ENCODE measurements at regions of chr12 and their contacts with region 1.

Region 1: DNA sequence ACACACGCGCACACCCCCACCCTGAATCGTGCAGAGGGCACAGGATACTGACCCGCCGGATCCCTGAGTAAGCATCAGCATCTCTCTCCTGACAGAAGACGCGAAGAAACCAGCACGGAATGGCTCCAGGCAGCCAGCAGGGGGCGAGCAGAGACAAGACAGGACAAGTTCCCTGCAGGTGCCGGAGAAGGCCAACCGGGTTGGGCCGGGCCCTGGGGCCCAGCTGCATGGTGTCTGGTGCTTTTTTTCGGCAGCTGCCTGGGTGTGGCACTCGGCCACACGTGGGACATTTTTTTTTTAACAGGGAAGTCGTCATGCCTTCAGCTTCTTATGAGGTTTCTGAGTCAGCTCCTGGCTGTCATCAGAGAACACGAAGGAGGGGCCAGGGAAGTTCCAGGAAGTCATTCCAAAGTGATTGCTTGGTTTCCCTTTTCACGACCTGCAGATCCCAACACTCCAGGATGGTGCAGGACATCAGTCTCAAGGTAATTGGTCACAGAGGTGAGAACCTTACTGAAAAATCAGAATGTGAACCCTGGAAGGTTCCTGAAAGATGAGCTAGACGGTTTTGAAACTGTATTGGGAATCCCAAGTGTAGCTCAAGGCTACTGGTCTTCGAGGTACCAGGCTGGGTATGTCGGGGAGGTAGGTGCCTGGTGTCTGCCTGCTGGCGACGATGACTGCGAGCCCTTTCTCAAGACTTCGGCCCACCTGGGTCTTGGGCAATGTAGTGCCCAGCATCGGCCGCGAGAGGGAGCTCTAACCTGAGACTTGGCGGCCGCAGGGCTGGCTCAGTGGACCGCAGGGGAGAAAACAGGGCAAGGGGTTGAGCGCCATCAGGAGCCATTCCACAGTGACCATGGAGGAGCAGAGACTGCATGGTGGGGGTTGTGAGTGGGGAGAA is 190.8 kb upstream of the PRMT8 start:
- DNase-seq: peak; percentile 98
- H3K4me3 ChIP-seq: peak overlapping the region; percentile 64
- H3K27ac ChIP-seq: peak overlapping the region; percentile 81
- H3K4me1 ChIP-seq: peaks cover 14% of the 10 kb centered on the region
- H3K27me3 ChIP-seq: 0 out of 2 replicates have a peak, but pooled peaks cover 2% of the 10 kb centered on the region

Region 2: DNA sequence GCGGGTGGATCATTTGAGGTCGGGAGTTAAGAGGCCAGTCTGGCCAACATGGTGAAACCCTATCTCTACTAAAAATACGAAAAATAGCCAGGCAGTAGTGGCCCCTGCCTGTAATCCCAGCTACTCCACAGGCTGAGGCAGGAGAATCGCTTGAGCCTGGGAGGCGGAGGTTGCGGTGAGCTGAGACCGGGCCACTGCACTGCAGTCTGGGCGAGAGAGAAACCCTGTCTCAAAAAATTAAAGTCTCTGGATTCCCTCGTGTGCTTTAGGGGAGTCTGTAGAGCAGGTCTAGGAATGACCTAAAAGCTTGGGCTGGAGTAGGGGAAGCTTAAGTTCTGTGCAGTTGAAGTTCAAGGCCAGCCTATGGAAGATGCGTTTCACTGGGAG is 410.2 kb before region 1 on chr12:
- in situ Hi-C with region 1: no loop called
- DNase-seq: no peak
- H3K4me3 ChIP-seq: peak overlapping the region; percentile 86
- H3K27ac ChIP-seq: peak overlapping the region; percentile 92
- H3K4me1 ChIP-seq: peaks cover 16% of the 10 kb centered on the region
- H3K27me3 ChIP-seq: no peaks in the 10 kb centered on the region

Region 3: GRCh38 chr12:3789838-3790237 is 489.7 kb after region 1 on chr12:
- in situ Hi-C with region 1: loop called (anchors 10 kb)
- DNase-seq: no peak
- H3K4me3 ChIP-seq: no peak overlapping the region
- H3K27ac ChIP-seq: no peak overlapping the region
- H3K4me1 ChIP-seq: no peaks in the 10 kb centered on the region
- H3K27me3 ChIP-seq: no peaks in the 10 kb centered on the region

Measured in GM23248 (cell line).